MCF 10A (cell line): ENCODE measurements at regions of chr12 and their contacts with region 1.

Region 1: DNA sequence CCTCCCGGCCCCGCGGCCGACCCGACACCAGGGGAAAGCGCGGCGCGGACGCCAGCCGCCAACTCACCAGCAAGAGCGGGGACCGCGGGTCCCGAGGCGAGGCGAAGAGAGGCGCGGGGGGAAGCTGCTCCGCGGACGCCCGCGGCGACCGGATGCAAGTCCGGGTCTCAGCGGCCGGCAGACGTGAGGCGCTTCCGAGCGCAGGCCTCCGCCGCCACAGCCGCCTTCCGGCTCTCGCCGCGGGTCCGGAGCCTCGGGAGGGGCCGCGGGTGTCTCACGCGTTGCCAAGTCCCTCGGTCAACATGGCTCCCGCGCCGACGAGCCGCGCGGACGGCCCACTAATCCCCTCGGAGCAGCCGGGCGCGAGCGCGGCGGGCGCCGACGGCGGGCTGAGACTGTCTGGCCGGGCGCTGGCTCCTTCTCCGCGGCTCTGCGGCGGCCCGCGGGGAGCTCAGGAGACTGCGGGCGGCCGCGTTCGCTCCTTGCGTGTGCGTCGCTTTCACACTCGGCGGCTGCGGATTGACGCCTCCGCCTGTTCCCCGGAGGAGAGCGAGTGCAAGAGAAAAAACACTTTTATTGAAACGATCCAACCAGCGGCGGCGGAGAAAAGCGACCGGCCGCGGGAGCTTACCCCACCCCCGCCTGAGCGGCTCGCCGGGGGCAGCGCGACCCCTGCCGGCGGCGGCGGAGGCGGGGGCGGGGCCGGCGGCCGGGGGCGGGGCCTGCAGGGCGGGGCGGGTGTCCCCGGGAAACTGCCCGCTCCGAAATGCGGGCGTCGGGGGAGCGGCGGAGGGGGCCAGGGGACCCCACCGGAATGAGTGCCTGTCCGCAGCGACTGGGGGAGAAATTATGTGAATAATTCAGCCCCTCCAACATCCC is at the start of gene CDK17:
- DNase-seq: peak; percentile 82
- H3K4me3 Mint-ChIP-seq: peak within 1 kb of the TSS; percentile 98
- H3K27ac Mint-ChIP-seq: peak within 1 kb of the TSS; percentile 98
- H3K4me1 Mint-ChIP-seq: peaks cover 32% of the 10 kb centered on the region
- H3K27me3 Mint-ChIP-seq: no peaks in the 10 kb centered on the region
- CTCF ChIP-seq: peak; percentile 40
- total RNA-seq, gene CDK17: 49.8 and 50.9 TPM in 2 replicates

Region 2: GRCh38 chr12:95874452-95874851 is 525.7 kb before region 1 on chr12:
- CTCF ChIA-PET with region 1: no interaction called
- POLR2A ChIA-PET with region 1: no interaction called
- intact Hi-C with region 1: no loop called
- DNase-seq: no peak
- H3K4me3 Mint-ChIP-seq: no peak overlapping the region
- H3K27ac Mint-ChIP-seq: no peak overlapping the region
- H3K4me1 Mint-ChIP-seq: no peaks in the 10 kb centered on the region
- H3K27me3 Mint-ChIP-seq: no peaks in the 10 kb centered on the region
- CTCF ChIP-seq: no peak

Region 3: GRCh38 chr12:96061864-96062453 is 338.2 kb before region 1 on chr12:
- CTCF ChIA-PET with region 1: interaction called, 12 read pairs
- POLR2A ChIA-PET with region 1: interaction called, 4 read pairs
- intact Hi-C with region 1: loop called (anchors 1 kb)
- DNase-seq: peak; percentile 87
- H3K4me3 Mint-ChIP-seq: no peak overlapping the region
- H3K27ac Mint-ChIP-seq: no peak overlapping the region
- H3K4me1 Mint-ChIP-seq: peaks cover 5% of the 10 kb centered on the region
- H3K27me3 Mint-ChIP-seq: no peaks in the 10 kb centered on the region
- CTCF ChIP-seq: peak; percentile 82

Region 4: GRCh38 chr12:96146747-96147146 is 253.4 kb before region 1 on chr12:
- CTCF ChIA-PET with region 1: no interaction called
- POLR2A ChIA-PET with region 1: no interaction called
- intact Hi-C with region 1: no loop called
- DNase-seq: no peak
- H3K4me3 Mint-ChIP-seq: no peak overlapping the region
- H3K27ac Mint-ChIP-seq: no peak overlapping the region
- H3K4me1 Mint-ChIP-seq: no peaks in the 10 kb centered on the region
- H3K27me3 Mint-ChIP-seq: no peaks in the 10 kb centered on the region
- CTCF ChIP-seq: no peak

Region 5: GRCh38 chr12:96237465-96238077 is 162.6 kb before region 1 on chr12:
- CTCF ChIA-PET with region 1: interaction called, 7 read pairs
- POLR2A ChIA-PET with region 1: interaction called, 42 read pairs
- intact Hi-C with region 1: no loop called
- DNase-seq: peak; percentile 93
- H3K4me3 Mint-ChIP-seq: peak overlapping the region; percentile 32
- H3K27ac Mint-ChIP-seq: peak overlapping the region; percentile 95
- H3K4me1 Mint-ChIP-seq: peaks cover 47% of the 10 kb centered on the region
- H3K27me3 Mint-ChIP-seq: no peaks in the 10 kb centered on the region
- CTCF ChIP-seq: no peak

Region 6: DNA sequence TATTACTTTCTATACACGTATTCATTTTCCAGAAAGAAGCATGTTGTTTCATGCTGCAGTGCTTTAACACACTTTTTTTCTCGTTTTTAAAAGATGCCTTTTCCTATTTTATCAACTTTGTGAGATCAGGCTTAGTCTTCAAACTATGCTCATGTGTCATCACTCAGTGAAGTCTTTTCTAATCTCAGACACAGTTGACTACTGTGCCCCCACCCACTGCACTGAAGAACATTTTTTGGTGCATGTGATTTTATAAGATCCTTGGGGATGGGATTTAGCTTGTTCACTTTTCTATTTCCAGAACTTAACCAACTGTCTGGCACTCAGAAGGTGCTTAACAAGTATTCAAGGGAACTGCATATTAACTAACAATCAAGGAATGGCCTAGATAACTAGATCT is 85.4 kb before region 1 on chr12:
- CTCF ChIA-PET with region 1: interaction called, 4 read pairs
- POLR2A ChIA-PET with region 1: interaction called, 42 read pairs
- intact Hi-C with region 1: no loop called
- DNase-seq: no peak
- H3K4me3 Mint-ChIP-seq: no peak overlapping the region
- H3K27ac Mint-ChIP-seq: no peak overlapping the region
- H3K4me1 Mint-ChIP-seq: no peaks in the 10 kb centered on the region
- H3K27me3 Mint-ChIP-seq: no peaks in the 10 kb centered on the region
- CTCF ChIP-seq: no peak

Region 7: DNA sequence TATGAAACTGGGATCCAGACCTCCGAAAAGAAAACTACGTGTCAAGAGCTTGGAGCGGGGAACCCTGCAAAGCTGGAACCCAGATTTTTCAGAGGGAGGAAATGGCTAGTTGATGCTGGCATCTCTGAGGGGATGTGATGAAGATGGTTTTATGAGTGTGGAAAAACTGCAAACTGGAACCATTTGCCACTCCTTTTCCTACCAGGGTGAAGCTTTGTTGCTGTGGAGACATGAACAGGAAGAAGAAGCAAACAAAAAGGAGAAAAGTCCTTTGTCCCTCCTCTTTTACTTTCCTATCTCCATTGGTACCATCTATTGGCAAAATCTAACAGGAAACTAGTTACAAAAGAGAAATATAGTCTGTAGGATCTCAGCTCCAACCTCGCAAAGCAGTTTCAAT is 39.1 kb before region 1 on chr12:
- CTCF ChIA-PET with region 1: interaction called, 3 read pairs
- POLR2A ChIA-PET with region 1: interaction called, 11 read pairs
- intact Hi-C with region 1: no loop called
- DNase-seq: no peak
- H3K4me3 Mint-ChIP-seq: no peak overlapping the region
- H3K27ac Mint-ChIP-seq: no peak overlapping the region
- H3K4me1 Mint-ChIP-seq: peaks cover 18% of the 10 kb centered on the region
- H3K27me3 Mint-ChIP-seq: no peaks in the 10 kb centered on the region
- CTCF ChIP-seq: no peak

Region 8: DNA sequence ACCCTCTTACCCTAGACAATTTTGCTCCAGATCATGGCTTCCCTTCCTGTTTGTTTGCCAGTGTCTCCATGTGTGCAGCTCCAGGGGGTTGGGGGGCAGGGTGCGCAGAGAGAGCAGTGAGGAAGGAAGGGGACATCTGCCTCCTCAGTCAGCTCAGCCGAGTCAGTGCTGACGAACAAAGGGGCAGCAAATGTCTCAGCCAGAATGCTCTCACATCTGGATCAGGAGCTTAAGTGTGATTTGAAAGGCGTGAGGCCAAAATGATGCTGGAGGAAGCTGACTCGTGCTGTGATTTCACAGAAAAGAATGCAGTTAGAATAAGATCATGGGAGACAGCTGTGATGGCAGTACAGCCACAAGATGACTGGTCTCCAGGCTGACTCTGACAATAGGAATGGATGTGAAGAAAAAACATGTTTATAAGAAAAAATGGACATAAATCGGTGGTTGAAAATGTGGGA is 27.1 kb after region 1 on chr12:
- CTCF ChIA-PET with region 1: interaction called, 10 read pairs
- POLR2A ChIA-PET with region 1: interaction called, 20 read pairs
- intact Hi-C with region 1: no loop called
- DNase-seq: peak; percentile 97
- H3K4me3 Mint-ChIP-seq: peak overlapping the region; percentile 69
- H3K27ac Mint-ChIP-seq: peak overlapping the region; percentile 97
- H3K4me1 Mint-ChIP-seq: peaks cover 45% of the 10 kb centered on the region
- H3K27me3 Mint-ChIP-seq: no peaks in the 10 kb centered on the region
- CTCF ChIP-seq: no peak

Region 9: GRCh38 chr12:96516472-96517430 is 116.6 kb after region 1 on chr12:
- CTCF ChIA-PET with region 1: interaction called, 45 read pairs
- POLR2A ChIA-PET with region 1: interaction called, 37 read pairs
- intact Hi-C with region 1: loop called (anchors 1 kb)
- DNase-seq: peak; percentile 78
- H3K4me3 Mint-ChIP-seq: no peak overlapping the region
- H3K27ac Mint-ChIP-seq: no peak overlapping the region
- H3K4me1 Mint-ChIP-seq: peaks cover 8% of the 10 kb centered on the region
- H3K27me3 Mint-ChIP-seq: no peaks in the 10 kb centered on the region
- CTCF ChIP-seq: peak; percentile 63